B cell (primary cell): ENCODE measurements at regions of chr1 and their contacts with region 1.

Region 1: GRCh38 chr1:209248649-209249279 is 334.8 kb upstream of the CAMK1G start:
- DNase-seq: peak; percentile 50
- ATAC-seq: peak; percentile 61
- H3K4me3 ChIP-seq: no peak overlapping the region
- H3K4me3 Mint-ChIP-seq: no peak overlapping the region
- H3K27ac ChIP-seq: no peak overlapping the region
- H3K27ac Mint-ChIP-seq: no peak overlapping the region
- H3K4me1 ChIP-seq: no peaks in the 10 kb centered on the region
- H3K4me1 Mint-ChIP-seq: no peaks in the 10 kb centered on the region
- H3K27me3 ChIP-seq: peaks cover 0 to 3% (median 0%) of the 10 kb centered on the region in 4 experiments
- H3K27me3 Mint-ChIP-seq: peaks cover 3% of the 10 kb centered on the region
- CTCF ChIP-seq: peak; percentile 95

Region 2: GRCh38 chr1:208641579-208642280 is 607.0 kb before region 1 on chr1:
- CTCF ChIA-PET with region 1: no interaction called
- POLR2A ChIA-PET with region 1: no interaction called
- intact Hi-C with region 1: no loop called
- DNase-seq: no peak
- ATAC-seq: no peak
- H3K4me3 ChIP-seq: no peak overlapping the region
- H3K4me3 Mint-ChIP-seq: no peak overlapping the region
- H3K27ac ChIP-seq: no peak overlapping the region
- H3K27ac Mint-ChIP-seq: no peak overlapping the region
- H3K4me1 ChIP-seq: no peaks in the 10 kb centered on the region
- H3K4me1 Mint-ChIP-seq: no peaks in the 10 kb centered on the region
- H3K27me3 ChIP-seq: no peaks in the 10 kb centered on the region
- H3K27me3 Mint-ChIP-seq: peaks cover 11% of the 10 kb centered on the region
- CTCF ChIP-seq: no peak

Region 3: DNA sequence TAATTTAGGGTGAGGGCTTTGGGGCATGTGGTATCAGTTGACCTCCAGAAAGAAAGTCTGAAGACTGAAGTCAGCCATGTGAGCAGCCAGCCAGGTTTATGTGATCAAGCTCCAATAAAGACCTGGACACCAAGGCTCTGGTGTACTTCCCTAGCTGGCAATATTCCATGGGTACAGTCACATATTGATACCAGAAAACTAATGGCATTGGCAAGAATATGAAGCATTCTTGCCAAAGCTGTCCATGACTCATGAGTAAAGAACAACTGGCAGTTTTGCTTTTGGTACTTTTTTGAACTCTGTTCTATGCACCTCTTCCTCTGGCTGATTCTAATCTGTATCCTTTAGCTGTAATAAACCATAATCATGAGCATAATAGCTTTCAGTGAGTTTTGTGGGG is 80.6 kb before region 1 on chr1:
- CTCF ChIA-PET with region 1: no interaction called
- POLR2A ChIA-PET with region 1: no interaction called
- intact Hi-C with region 1: no loop called
- DNase-seq: no peak
- ATAC-seq: no peak
- H3K4me3 ChIP-seq: no peak overlapping the region
- H3K4me3 Mint-ChIP-seq: no peak overlapping the region
- H3K27ac ChIP-seq: no peak overlapping the region
- H3K27ac Mint-ChIP-seq: no peak overlapping the region
- H3K4me1 ChIP-seq: no peaks in the 10 kb centered on the region
- H3K4me1 Mint-ChIP-seq: no peaks in the 10 kb centered on the region
- H3K27me3 ChIP-seq: no peaks in the 10 kb centered on the region
- H3K27me3 Mint-ChIP-seq: no peaks in the 10 kb centered on the region
- CTCF ChIP-seq: no peak

Region 4: DNA sequence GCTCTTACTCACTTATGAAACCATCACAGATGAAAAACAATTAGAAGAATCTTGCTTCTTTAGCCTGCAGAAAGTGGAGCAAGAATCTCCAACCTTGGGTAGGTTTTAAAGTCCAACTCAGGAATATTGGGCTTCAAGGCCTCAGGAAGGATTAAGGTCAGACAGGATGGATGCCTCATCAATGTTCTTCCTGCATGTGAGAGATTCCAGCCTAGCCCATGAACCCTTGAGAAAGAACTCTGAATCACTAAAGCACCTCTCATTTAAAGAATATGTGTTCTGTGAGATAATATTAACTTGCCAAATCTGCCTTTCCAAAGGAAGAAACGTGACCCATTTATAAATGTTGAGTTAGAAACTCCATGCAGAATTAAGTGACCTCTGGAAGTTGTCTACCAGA is 10.4 kb before region 1 on chr1:
- CTCF ChIA-PET with region 1: interaction called, 14 read pairs
- POLR2A ChIA-PET with region 1: no interaction called
- intact Hi-C with region 1: no loop called
- DNase-seq: no peak
- ATAC-seq: no peak
- H3K4me3 ChIP-seq: no peak overlapping the region
- H3K4me3 Mint-ChIP-seq: no peak overlapping the region
- H3K27ac ChIP-seq: no peak overlapping the region
- H3K27ac Mint-ChIP-seq: no peak overlapping the region
- H3K4me1 ChIP-seq: no peaks in the 10 kb centered on the region
- H3K4me1 Mint-ChIP-seq: no peaks in the 10 kb centered on the region
- H3K27me3 ChIP-seq: no peaks in the 10 kb centered on the region
- H3K27me3 Mint-ChIP-seq: peaks cover 8% of the 10 kb centered on the region
- CTCF ChIP-seq: no peak